GM12878 (cell line): ENCODE measurements at regions of chr5 and their contacts with region 1.

Region 1: DNA sequence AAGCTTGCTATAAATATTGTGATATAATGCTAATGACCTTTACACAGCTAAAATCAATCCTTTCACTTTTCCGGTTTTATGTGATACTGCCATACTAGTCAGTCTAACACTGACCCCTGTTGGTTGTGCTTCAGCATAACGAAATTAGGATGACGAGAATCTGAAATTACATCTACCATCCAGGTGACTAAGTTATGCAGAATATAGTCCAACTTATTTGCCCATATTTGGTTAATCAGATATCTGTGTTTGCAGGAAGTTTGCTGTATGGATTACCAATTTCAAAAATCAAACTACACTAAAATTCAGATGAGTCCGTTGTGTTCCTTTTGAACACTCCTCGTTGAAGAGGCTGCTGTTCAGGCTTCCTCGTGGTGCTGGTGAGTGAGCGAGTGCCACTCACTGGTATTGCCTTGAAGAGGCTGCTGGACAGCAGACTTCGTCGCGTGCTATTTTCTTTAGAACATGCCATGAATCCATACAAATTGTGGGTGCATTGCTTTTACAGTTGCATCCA is 32.5 kb downstream of the TENT4A start:
- DNase-seq: no peak
- ATAC-seq: peak; percentile 77
- H3K4me3 ChIP-seq: no peak overlapping the region
- H3K27ac ChIP-seq: no peak overlapping the region
- H3K4me1 ChIP-seq: no peaks in the 10 kb centered on the region
- H3K27me3 ChIP-seq: no peaks in the 10 kb centered on the region
- CTCF ChIP-seq: peak; percentile 68 to 88 (median 81)
- EP300 ChIP-seq: no peak
- POLR2A ChIP-seq: no peak
- RAD21 ChIP-seq: peak; percentile 90

Region 2: GRCh38 chr5:5481206-5481605 is 1264.6 kb before region 1 on chr5:
- CTCF ChIA-PET with region 1: no interaction called
- POLR2A ChIA-PET with region 1: no interaction called
- RAD21 ChIA-PET with region 1: no interaction called
- SMC1A ChIA-PET with region 1: no interaction called
- in situ Hi-C with region 1: loop called (anchors 10 kb)
- intact Hi-C with region 1: no loop called
- DNase-seq: no peak
- ATAC-seq: peak; percentile 68
- H3K4me3 ChIP-seq: no peak overlapping the region
- H3K27ac ChIP-seq: peak overlapping the region; percentile 17; the same call in 1 of the 2 replicates
- H3K4me1 ChIP-seq: peaks cover 8% of the 10 kb centered on the region; the same call in 1 of the 2 replicates
- H3K27me3 ChIP-seq: no peaks in the 10 kb centered on the region
- CTCF ChIP-seq: no peak
- EP300 ChIP-seq: no peak
- POLR2A ChIP-seq: no peak
- RAD21 ChIP-seq: no peak

Region 3: GRCh38 chr5:6291961-6292360 is 453.8 kb before region 1 on chr5:
- CTCF ChIA-PET with region 1: no interaction called
- POLR2A ChIA-PET with region 1: no interaction called
- RAD21 ChIA-PET with region 1: no interaction called
- SMC1A ChIA-PET with region 1: no interaction called
- in situ Hi-C with region 1: no loop called
- intact Hi-C with region 1: loop called (anchors 2 kb)
- DNase-seq: no peak
- ATAC-seq: peak; percentile 74
- H3K4me3 ChIP-seq: no peak overlapping the region
- H3K27ac ChIP-seq: no peak overlapping the region
- H3K4me1 ChIP-seq: no peaks in the 10 kb centered on the region
- H3K27me3 ChIP-seq: no peaks in the 10 kb centered on the region
- CTCF ChIP-seq: peak; percentile 34 to 55 (median 46); a peak in 5 of 6 replicates
- EP300 ChIP-seq: no peak
- POLR2A ChIP-seq: no peak
- RAD21 ChIP-seq: peak; percentile 60

Region 4: GRCh38 chr5:6632917-6633468 is 112.8 kb before region 1 on chr5 and contains the starts of genes NSUN2 and SRD5A1:
- CTCF ChIA-PET with region 1: interaction called, 19 read pairs
- POLR2A ChIA-PET with region 1: interaction called, 3 read pairs
- RAD21 ChIA-PET with region 1: interaction called, 8 read pairs
- SMC1A ChIA-PET with region 1: interaction called, 16 read pairs
- in situ Hi-C with region 1: no loop called
- intact Hi-C with region 1: loop called (anchors 2 kb)
- DNase-seq: peak; percentile 71
- ATAC-seq: peak; percentile 90
- H3K4me3 ChIP-seq: peak within 1 kb of the TSS; percentile 98
- H3K27ac ChIP-seq: peak within 1 kb of the TSS; percentile 97
- H3K4me1 ChIP-seq: peaks cover 4% of the 10 kb centered on the region; the same call in 1 of the 2 replicates
- H3K27me3 ChIP-seq: no peaks in the 10 kb centered on the region
- CTCF ChIP-seq: no peak
- EP300 ChIP-seq: no peak
- POLR2A ChIP-seq: peak; percentile 93
- RAD21 ChIP-seq: 0 out of 2 replicates have a peak, but pooled peaks have one; percentile 2
- polyA plus RNA-seq, gene NSUN2: 8.0 to 10.8 TPM
- polyA plus RNA-seq, gene SRD5A1: 0.76 to 2.0 TPM

Region 5: DNA sequence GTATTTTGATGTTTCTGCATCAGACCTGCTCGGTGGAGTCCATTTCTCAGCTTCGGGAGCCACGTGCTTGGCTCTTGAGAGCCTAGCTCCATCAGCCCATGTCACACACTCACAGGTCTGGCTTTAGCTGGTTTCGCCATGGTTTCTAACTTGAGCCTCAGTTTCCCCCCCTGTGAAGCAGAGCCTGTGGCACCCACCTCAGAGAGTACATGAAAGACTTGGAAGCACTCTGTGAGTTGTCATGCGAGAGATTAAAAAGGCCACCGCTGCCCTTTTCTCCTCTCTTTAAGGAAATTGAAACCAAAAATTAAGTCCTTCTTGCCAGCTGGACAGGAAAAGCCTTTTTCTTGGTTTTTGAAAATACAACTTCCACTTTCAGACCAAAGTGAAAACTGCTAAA is 23.7 kb before region 1 on chr5:
- CTCF ChIA-PET with region 1: interaction called, 23 read pairs
- POLR2A ChIA-PET with region 1: interaction called, 3 read pairs
- RAD21 ChIA-PET with region 1: interaction called, 11 read pairs
- SMC1A ChIA-PET with region 1: interaction called, 15 read pairs
- in situ Hi-C with region 1: no loop called
- intact Hi-C with region 1: loop called (anchors 2 kb)
- DNase-seq: no peak
- ATAC-seq: peak; percentile 38
- H3K4me3 ChIP-seq: peak overlapping the region; percentile 72
- H3K27ac ChIP-seq: peak overlapping the region; percentile 79
- H3K4me1 ChIP-seq: peaks cover 36% of the 10 kb centered on the region
- H3K27me3 ChIP-seq: no peaks in the 10 kb centered on the region
- CTCF ChIP-seq: no peak
- EP300 ChIP-seq: no peak
- POLR2A ChIP-seq: no peak
- RAD21 ChIP-seq: no peak